Activated B cell treated with CpG ODN at 0.5 μM for 24 hours (primary cell): ENCODE measurements at regions of chr3 and their contacts with region 1.

Region 1: GRCh38 chr3:157174649-157175498 is 14.9 kb upstream of the CCNL1 start:
- DNase-seq: peak; percentile 91
- ATAC-seq: peak; percentile 90
- H3K4me3 Mint-ChIP-seq: peak overlapping the region; percentile 90
- H3K27ac Mint-ChIP-seq: peak overlapping the region; percentile 98
- H3K4me1 Mint-ChIP-seq: peaks cover 30% of the 10 kb centered on the region
- H3K27me3 Mint-ChIP-seq: no peaks in the 10 kb centered on the region
- CTCF ChIP-seq: no peak

Region 2: GRCh38 chr3:155744626-155745324 is 1430.1 kb before region 1 on chr3 and contains the start of gene PLCH1:
- CTCF ChIA-PET with region 1: no interaction called
- POLR2A ChIA-PET with region 1: no interaction called
- intact Hi-C with region 1: loop called (anchors 10 kb)
- DNase-seq: peak; percentile 20
- ATAC-seq: peak; percentile 81
- H3K4me3 Mint-ChIP-seq: peak within 1 kb of the TSS; percentile 87
- H3K27ac Mint-ChIP-seq: peak within 1 kb of the TSS; percentile 66
- H3K4me1 Mint-ChIP-seq: peaks cover 25% of the 10 kb centered on the region
- H3K27me3 Mint-ChIP-seq: peaks cover 20% of the 10 kb centered on the region
- CTCF ChIP-seq: no peak
- total RNA-seq, gene PLCH1: 0.12 and 0.27 TPM in 2 replicates

Region 3: GRCh38 chr3:155870133-155870944 is 1304.5 kb before region 1 on chr3 and contains the start of gene GMPS:
- CTCF ChIA-PET with region 1: no interaction called
- POLR2A ChIA-PET with region 1: no interaction called
- intact Hi-C with region 1: loop called (anchors 1 kb)
- DNase-seq: peak; percentile 97
- ATAC-seq: peak; percentile 92
- H3K4me3 Mint-ChIP-seq: peak within 1 kb of the TSS; percentile 92
- H3K27ac Mint-ChIP-seq: peak within 1 kb of the TSS; percentile 93
- H3K4me1 Mint-ChIP-seq: peaks cover 18% of the 10 kb centered on the region
- H3K27me3 Mint-ChIP-seq: no peaks in the 10 kb centered on the region
- CTCF ChIP-seq: no peak
- total RNA-seq, gene GMPS: 42.2 and 45.1 TPM in 2 replicates

Region 4: GRCh38 chr3:156554842-156555687 is 619.8 kb before region 1 on chr3 and contains the start of gene SSR3:
- CTCF ChIA-PET with region 1: no interaction called
- POLR2A ChIA-PET with region 1: interaction called, 23 read pairs
- intact Hi-C with region 1: loop called (anchors 1 kb)
- DNase-seq: peak; percentile 94
- ATAC-seq: peak; percentile 99
- H3K4me3 Mint-ChIP-seq: peak within 1 kb of the TSS; percentile 98
- H3K27ac Mint-ChIP-seq: peak within 1 kb of the TSS; percentile 91
- H3K4me1 Mint-ChIP-seq: peaks cover 37% of the 10 kb centered on the region
- H3K27me3 Mint-ChIP-seq: no peaks in the 10 kb centered on the region
- CTCF ChIP-seq: no peak
- total RNA-seq, gene SSR3: 64.3 and 69.2 TPM in 2 replicates

Region 5: DNA sequence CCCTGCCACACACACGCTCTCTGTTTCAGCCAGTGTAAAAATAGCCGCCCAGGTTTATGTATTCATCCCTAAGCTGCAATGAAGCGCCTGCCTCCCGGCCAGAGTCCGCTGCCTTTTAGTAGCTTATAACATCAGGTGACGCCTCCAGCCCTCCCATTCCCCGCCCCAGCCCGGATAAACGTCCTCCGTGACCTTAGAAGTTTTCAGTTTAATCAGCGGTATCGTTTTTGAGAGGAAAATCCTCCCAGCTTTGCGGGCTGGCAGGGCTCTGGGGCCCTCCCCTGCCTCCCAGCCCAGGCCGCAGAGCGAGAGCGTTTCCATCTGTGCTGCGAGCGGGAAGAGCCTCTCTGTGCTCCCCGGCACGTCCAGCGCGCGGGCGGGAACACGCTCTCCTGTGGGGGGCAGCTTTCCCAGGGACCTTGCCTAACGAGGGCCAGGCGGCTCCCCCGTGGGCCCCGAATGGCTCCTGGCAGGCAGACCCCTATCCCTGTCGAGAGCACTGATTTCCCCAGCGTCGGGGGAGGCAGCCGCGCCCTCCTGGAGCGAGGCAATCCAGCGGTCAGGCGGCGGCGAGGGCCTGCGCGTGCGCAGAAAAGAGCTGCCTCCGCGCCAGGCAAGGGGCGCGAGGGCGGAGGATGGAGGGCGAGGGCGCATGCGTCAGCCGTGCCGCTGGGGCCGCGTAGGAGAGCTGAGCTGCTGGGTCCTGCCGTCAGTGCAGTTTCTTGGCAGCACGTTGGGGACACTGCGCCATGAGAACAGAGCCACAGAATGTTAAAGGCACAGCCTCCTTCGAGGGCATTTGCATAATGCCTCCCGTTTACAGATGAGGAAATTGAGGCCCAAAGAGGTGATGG is 86.0 kb before region 1 on chr3:
- CTCF ChIA-PET with region 1: no interaction called
- POLR2A ChIA-PET with region 1: interaction called, 35 read pairs
- intact Hi-C with region 1: loop called (anchors 1 kb)
- DNase-seq: peak; percentile 92
- ATAC-seq: peak; percentile 92
- H3K4me3 Mint-ChIP-seq: peak overlapping the region; percentile 90
- H3K27ac Mint-ChIP-seq: peak overlapping the region; percentile 90
- H3K4me1 Mint-ChIP-seq: peaks cover 26% of the 10 kb centered on the region
- H3K27me3 Mint-ChIP-seq: peaks cover 1% of the 10 kb centered on the region
- CTCF ChIP-seq: no peak

Region 6: GRCh38 chr3:157201648-157202278 is 26.9 kb after region 1 on chr3:
- CTCF ChIA-PET with region 1: interaction called, 3 read pairs
- POLR2A ChIA-PET with region 1: interaction called, 14 read pairs
- intact Hi-C with region 1: loop called (anchors 1 kb)
- DNase-seq: no peak
- ATAC-seq: peak; percentile 50
- H3K4me3 Mint-ChIP-seq: no peak overlapping the region
- H3K27ac Mint-ChIP-seq: no peak overlapping the region
- H3K4me1 Mint-ChIP-seq: peaks cover 4% of the 10 kb centered on the region
- H3K27me3 Mint-ChIP-seq: no peaks in the 10 kb centered on the region
- CTCF ChIP-seq: peak; percentile 47

Region 7: DNA sequence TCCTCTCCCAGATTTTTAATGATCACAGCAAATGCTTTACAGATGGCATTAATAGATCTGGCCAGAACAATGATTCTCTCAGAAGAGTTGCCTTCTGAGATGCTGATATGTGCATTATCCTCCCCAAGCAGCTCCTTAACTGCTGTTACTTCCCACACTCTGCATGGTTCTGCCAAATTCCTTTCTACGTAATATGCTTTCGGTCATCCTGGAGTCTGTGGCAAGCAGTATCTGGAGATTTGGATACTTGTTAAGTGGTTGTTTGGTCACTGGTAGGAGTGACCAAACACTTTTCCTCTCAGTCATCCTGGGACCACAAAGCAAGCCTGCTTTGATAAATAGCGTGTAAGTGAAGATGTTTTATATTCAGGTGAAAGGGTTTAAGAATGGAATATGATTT is 56.2 kb after region 1 on chr3:
- CTCF ChIA-PET with region 1: no interaction called
- POLR2A ChIA-PET with region 1: no interaction called
- intact Hi-C with region 1: no loop called
- DNase-seq: no peak
- ATAC-seq: no peak
- H3K4me3 Mint-ChIP-seq: no peak overlapping the region
- H3K27ac Mint-ChIP-seq: no peak overlapping the region
- H3K4me1 Mint-ChIP-seq: peaks cover 1% of the 10 kb centered on the region
- H3K27me3 Mint-ChIP-seq: no peaks in the 10 kb centered on the region
- CTCF ChIP-seq: no peak

Region 8: GRCh38 chr3:158109804-158110657 is 935.2 kb after region 1 on chr3 and contains the start of gene RSRC1:
- CTCF ChIA-PET with region 1: no interaction called
- POLR2A ChIA-PET with region 1: interaction called, 5 read pairs
- intact Hi-C with region 1: loop called (anchors 1 kb)
- DNase-seq: peak; percentile 72
- ATAC-seq: peak; percentile 89
- H3K4me3 Mint-ChIP-seq: peak within 1 kb of the TSS; percentile 90
- H3K27ac Mint-ChIP-seq: peak within 1 kb of the TSS; percentile 83
- H3K4me1 Mint-ChIP-seq: peaks cover 48% of the 10 kb centered on the region
- H3K27me3 Mint-ChIP-seq: peaks cover 31% of the 10 kb centered on the region
- CTCF ChIP-seq: no peak
- total RNA-seq, gene RSRC1: 39.9 and 44.8 TPM in 2 replicates